Activated CD4-positive, alpha-beta memory T cell treated with anti-CD3 and anti-CD28 coated beads, Interleukin-2, amount 10 ng/mL, durations not matched to agents 7 days and 5 days (primary cell): ENCODE measurements at regions of chr14 and their contacts with region 1.

Region 1: GRCh38 chr14:33859306-33859705 is 91.6 kb downstream of the EGLN3 start:
- DNase-seq: no peak
- H3K4me3 Mint-ChIP-seq: no peak overlapping the region
- H3K27ac Mint-ChIP-seq: no peak overlapping the region
- H3K4me1 Mint-ChIP-seq: peaks cover 22% of the 10 kb centered on the region
- H3K27me3 Mint-ChIP-seq: peaks cover 8% of the 10 kb centered on the region

Region 2: DNA sequence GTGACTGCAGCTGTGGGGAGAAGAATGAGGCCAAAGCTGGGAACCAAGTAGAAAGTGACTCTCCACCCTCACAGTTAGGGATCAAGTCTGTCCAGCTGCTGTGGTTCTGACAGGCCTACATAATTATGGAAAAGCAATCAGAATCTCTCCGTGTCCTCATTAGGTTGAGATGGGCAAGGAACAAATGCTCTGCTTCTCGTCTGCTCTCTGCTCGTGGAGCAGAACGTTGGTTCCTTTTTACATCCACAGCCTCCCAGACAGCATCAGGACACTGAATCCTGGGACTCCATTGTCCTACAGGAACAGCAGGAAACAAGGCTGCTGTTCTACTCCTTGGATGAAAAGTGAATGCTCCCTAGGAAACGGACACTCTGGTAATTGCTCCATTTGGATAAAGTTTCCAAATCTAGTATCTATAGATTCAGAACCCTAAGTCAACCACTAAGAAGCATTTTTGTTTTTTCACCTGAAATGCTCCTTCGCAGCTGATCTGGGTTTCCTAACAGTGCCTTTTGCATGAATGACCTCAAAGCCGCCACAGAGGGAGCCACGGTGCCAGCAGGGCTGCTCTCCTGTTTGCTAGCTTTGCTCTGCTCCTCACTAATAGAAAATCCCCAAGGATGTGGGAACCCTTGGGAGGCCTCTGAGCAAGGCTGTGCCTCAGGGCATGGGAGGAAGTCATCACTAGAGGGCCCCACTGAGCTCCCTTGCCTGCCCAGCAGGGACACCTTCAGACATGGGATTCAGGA is 10.4 kb before region 1 on chr14:
- CTCF ChIA-PET with region 1: interaction called, 13 read pairs
- POLR2A ChIA-PET with region 1: no interaction called
- DNase-seq: peak; percentile 27
- H3K4me3 Mint-ChIP-seq: no peak overlapping the region
- H3K27ac Mint-ChIP-seq: no peak overlapping the region
- H3K4me1 Mint-ChIP-seq: peaks cover 7% of the 10 kb centered on the region
- H3K27me3 Mint-ChIP-seq: peaks cover 6% of the 10 kb centered on the region

Region 3: DNA sequence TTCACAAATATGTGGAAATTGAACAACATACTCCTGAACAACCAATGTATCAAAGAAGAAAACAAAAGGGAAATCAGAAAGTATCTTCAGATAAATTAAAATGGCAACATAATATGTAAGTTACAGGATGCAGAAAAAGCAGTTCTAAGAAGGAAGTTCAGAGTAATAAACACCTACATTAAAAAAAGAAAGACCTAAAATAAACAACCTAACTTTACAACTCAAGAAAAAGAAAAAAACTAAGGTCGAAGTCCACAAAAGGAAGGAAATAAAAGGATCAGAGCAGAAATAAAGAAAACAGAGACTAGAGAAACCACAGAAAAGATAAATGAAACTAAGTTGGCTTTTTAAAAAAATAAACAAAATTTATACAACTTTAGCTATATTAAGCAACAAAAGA is 32.4 kb after region 1 on chr14:
- CTCF ChIA-PET with region 1: no interaction called
- POLR2A ChIA-PET with region 1: no interaction called
- DNase-seq: no peak
- H3K4me3 Mint-ChIP-seq: no peak overlapping the region
- H3K27ac Mint-ChIP-seq: no peak overlapping the region
- H3K4me1 Mint-ChIP-seq: peaks cover 5% of the 10 kb centered on the region
- H3K27me3 Mint-ChIP-seq: no peaks in the 10 kb centered on the region

Region 4: DNA sequence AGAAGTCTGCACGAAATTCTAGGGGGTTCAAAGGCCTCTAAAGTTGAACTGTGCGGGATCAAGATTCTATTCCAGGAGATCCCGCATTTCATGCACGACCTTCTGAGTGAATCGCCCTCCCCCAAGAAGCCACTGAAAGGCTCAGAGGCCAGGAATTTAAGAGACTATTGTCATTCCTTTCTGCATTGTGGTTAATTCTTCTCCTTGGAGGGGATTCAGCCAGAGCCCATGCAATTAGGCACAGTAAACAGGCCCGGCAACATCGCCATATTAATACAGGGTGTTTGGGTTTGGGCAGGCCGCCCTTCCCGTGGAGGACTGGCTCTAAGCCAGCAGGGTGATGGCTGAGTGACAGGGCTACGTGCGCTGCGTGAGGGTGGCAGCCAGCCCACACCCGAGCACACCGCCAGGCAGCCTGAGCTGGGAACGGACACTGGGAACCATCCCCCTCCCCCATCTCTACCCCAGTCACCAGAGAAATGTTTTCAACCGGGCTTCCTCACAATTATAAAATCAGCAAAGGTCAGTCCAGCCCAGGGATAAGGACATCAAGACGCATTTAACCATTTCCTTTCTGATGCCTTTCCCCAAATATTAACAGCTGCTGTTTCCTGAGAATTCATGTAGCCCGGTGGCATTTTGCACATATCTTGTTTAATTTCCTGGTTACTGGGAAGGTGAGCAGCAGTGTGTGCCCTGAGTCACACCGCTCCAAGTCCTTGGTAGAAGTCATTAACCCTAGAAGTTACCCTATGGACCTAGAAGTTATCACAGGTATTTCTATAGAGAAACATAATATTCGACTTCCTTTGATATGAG is 79.0 kb after region 1 on chr14:
- CTCF ChIA-PET with region 1: no interaction called
- POLR2A ChIA-PET with region 1: no interaction called
- DNase-seq: no peak
- H3K4me3 Mint-ChIP-seq: no peak overlapping the region
- H3K27ac Mint-ChIP-seq: no peak overlapping the region
- H3K4me1 Mint-ChIP-seq: no peaks in the 10 kb centered on the region
- H3K27me3 Mint-ChIP-seq: peaks cover 2% of the 10 kb centered on the region

Region 5: DNA sequence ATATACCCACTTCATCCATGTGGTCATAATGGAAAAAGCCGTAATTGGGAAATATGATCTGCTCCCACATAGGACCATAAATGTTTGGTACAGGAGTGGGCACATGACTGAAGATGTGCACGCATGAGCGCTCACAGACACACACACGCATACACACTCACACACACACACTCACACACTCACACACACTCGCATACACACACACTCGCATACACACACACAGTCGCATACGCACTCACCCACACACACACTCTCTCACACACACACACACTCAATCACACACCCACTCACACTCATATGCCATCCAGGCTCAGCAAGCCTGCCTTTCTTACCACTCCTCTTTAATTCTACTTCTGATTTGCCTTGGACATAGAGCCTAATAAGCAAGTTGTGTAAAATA is 137.2 kb after region 1 on chr14:
- CTCF ChIA-PET with region 1: no interaction called
- POLR2A ChIA-PET with region 1: no interaction called
- DNase-seq: no peak
- H3K4me3 Mint-ChIP-seq: no peak overlapping the region
- H3K27ac Mint-ChIP-seq: no peak overlapping the region
- H3K4me1 Mint-ChIP-seq: no peaks in the 10 kb centered on the region
- H3K27me3 Mint-ChIP-seq: peaks cover 11% of the 10 kb centered on the region